Adrenal gland (tissue), 19 donors: ENCODE measurements at regions of chr12 and their contacts with region 1.

Region 1: DNA sequence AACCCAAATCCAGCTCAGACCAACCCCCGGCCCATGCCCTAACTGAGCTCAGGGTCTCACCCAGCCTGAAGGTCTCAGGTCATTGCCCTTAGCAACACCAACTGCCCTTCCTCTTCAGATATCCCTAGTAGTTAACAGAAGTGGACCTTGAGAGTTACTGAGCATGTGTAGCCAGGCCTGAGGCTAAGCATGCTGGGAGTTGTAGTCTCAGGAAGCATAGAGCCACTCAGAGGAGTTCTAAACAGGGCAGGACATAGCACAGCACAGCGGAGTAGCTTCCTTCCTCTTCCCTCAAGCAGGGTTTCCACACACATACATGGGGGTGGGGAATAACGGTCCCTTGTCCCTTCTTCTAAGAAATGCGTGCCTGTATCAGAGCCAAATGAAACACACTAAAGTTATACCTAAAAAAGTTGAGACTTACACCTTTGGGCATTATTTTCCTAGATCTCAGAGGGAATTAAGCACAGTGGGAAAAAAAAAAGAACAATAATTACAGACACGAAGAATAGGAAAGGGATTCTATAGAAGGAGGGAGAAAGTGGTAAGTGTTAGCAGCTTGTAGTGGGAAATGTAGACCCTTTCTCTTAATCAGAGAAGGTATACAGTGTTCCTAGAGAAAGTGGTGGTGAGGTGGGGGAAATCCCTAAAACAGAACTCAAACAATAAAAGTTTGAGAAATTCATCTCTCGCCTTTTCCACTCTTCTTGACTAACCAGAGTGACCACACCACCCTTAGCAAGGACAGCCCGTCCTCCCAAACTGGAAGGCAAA is 4.4 kb downstream of the KMT2D start:
- DNase-seq: peak; percentile 59 to 88 (median 75)
- H3K4me3 ChIP-seq: peak overlapping the region in 1 of 4 donors; percentile 71
- H3K27ac ChIP-seq: peak overlapping the region in 2 of 5 donors; percentile 1 to 18
- H3K4me1 ChIP-seq: peaks cover 38 to 41% of the 10 kb centered on the region in 2 donors
- H3K27me3 ChIP-seq: no peaks in the 10 kb centered on the region
- CTCF ChIP-seq: no peak
- POLR2A ChIP-seq: no peak

Region 2: DNA sequence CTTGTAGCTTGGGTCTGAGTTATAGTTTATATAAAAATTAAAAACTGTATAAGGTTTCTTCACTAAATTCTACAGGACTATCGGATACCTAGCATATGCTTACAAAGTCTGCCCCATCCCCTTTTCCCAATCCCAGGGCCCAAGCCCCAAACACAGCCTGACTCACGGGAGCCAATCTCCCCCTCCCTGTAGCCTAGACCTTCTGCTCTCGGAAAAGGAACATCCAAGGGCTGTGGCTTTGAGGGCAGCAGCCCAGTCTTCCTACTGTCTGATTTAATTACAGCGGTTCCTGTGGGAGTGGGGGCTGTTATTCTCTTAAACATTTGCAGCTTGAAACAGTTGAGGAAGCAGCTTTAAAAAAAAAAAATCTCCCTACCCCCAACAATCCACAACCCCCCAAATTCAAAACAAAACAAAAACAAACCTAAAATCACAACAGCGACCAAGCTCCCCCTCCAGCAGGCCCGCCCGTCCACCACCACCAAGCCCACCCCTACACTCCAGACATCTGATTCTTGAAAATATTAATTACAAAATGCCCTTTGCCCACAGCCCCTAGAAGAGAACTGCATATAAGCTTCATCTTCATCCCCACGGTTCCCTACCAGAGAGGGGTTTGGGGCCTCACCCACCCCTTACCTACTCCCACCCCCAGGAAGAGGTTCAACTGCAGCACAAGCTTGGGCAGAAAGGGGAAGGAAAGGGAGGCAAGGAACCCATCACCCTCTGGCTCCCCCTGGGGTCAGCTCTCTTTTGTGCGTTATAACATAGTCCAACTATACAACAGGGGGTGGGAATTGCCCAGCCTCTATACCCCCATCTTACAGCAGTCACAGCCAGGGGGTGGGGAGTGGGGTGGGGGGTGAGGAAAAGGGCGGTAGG is 36.5 kb before region 1 on chr12:
- intact Hi-C with region 1: loop called in 1 of 2 experiments (anchors 5 kb)
- DNase-seq: peak; percentile 36 to 74 (median 59)
- H3K4me3 ChIP-seq: peak overlapping the region in 1 of 4 donors; percentile 66
- H3K27ac ChIP-seq: peak overlapping the region; percentile 96 to 99 (median 97)
- H3K4me1 ChIP-seq: peaks cover 22 to 28% of the 10 kb centered on the region in 2 donors
- H3K27me3 ChIP-seq: no peaks in the 10 kb centered on the region
- CTCF ChIP-seq: peak in 1 of 6 experiments; percentile 19
- POLR2A ChIP-seq: peak in 1 of 2 donors; percentile 23

Region 3: GRCh38 chr12:49098035-49098451 is 41.9 kb after region 1 on chr12:
- intact Hi-C with region 1: no loop called
- DNase-seq: peak; percentile 34 to 75 (median 45)
- H3K4me3 ChIP-seq: no peak overlapping the region
- H3K27ac ChIP-seq: no peak overlapping the region
- H3K4me1 ChIP-seq: peaks cover 10 to 14% of the 10 kb centered on the region in 2 donors
- H3K27me3 ChIP-seq: peaks cover 1% of the 10 kb centered on the region
- CTCF ChIP-seq: peak; percentile 53 to 71 (median 64)
- POLR2A ChIP-seq: no peak